Gastrocnemius medialis (tissue), 4 donors: ENCODE measurements at regions of chr10 and their contacts with region 1.

Region 1: GRCh38 chr10:60123172-60124067 is 217.1 kb upstream of the CCDC6 start:
- DNase-seq: peak; percentile 52 to 53
- ATAC-seq: peak; percentile 98
- H3K4me3 ChIP-seq: no peak overlapping the region
- H3K27ac ChIP-seq: peak overlapping the region; percentile 75 to 90 (median 80)
- H3K4me1 ChIP-seq: peaks cover 29% of the 10 kb centered on the region in 2 donors
- H3K27me3 ChIP-seq: no peaks in the 10 kb centered on the region
- CTCF ChIP-seq: no peak
- POLR2A ChIP-seq: peak in 1 of 2 donors; percentile 10

Region 2: GRCh38 chr10:60140651-60141632 is 17.5 kb after region 1 on chr10:
- in situ Hi-C with region 1: no loop called
- intact Hi-C with region 1: loop called (anchors 2 kb)
- DNase-seq: peak; percentile 67 to 70
- ATAC-seq: peak; percentile 86 to 89
- H3K4me3 ChIP-seq: peak overlapping the region; percentile 56 to 63 (median 60)
- H3K27ac ChIP-seq: peak overlapping the region; percentile 86 to 96 (median 89)
- H3K4me1 ChIP-seq: peaks cover 25 to 31% of the 10 kb centered on the region in 2 donors
- H3K27me3 ChIP-seq: no peaks in the 10 kb centered on the region
- CTCF ChIP-seq: no peak
- POLR2A ChIP-seq: peak; percentile 30 to 51

Region 3: GRCh38 chr10:60237977-60238758 is 114.7 kb after region 1 on chr10:
- in situ Hi-C with region 1: no loop called
- intact Hi-C with region 1: no loop called
- DNase-seq: no peak
- ATAC-seq: peak in 1 of 2 donors; percentile 36
- H3K4me3 ChIP-seq: no peak overlapping the region
- H3K27ac ChIP-seq: no peak overlapping the region
- H3K4me1 ChIP-seq: no peaks in the 10 kb centered on the region
- H3K27me3 ChIP-seq: no peaks in the 10 kb centered on the region
- CTCF ChIP-seq: no peak
- POLR2A ChIP-seq: no peak